ENCODE measurements at regions of chr6 and their contacts with region 1.

Region 1: GRCh38 chr6:15691250-15691869 is 28.5 kb upstream of the DTNBP1 start:
- DNase-seq: peak; percentile 78
- ATAC-seq: peak; percentile 100
- H3K4me3 ChIP-seq: no peak overlapping the region
- H3K27ac ChIP-seq: no peak overlapping the region
- H3K4me1 ChIP-seq: no peaks in the 10 kb centered on the region
- H3K27me3 ChIP-seq: no peaks in the 10 kb centered on the region
- CTCF ChIP-seq: peak; percentile 100
- POLR2A ChIP-seq: no peak
- RAD21 ChIP-seq: peak; percentile 99

Region 2: GRCh38 chr6:15722731-15723130 is 31.4 kb after region 1 on chr6:
- CTCF ChIA-PET with region 1: no interaction called
- POLR2A ChIA-PET with region 1: no interaction called
- RAD21 ChIA-PET with region 1: interaction called in 1 of 2 experiments, 11 read pairs
- intact Hi-C with region 1: no loop called
- DNase-seq: no peak
- ATAC-seq: no peak
- H3K4me3 ChIP-seq: no peak overlapping the region
- H3K27ac ChIP-seq: no peak overlapping the region
- H3K4me1 ChIP-seq: no peaks in the 10 kb centered on the region
- H3K27me3 ChIP-seq: no peaks in the 10 kb centered on the region
- CTCF ChIP-seq: no peak
- POLR2A ChIP-seq: no peak
- RAD21 ChIP-seq: no peak

Region 3: DNA sequence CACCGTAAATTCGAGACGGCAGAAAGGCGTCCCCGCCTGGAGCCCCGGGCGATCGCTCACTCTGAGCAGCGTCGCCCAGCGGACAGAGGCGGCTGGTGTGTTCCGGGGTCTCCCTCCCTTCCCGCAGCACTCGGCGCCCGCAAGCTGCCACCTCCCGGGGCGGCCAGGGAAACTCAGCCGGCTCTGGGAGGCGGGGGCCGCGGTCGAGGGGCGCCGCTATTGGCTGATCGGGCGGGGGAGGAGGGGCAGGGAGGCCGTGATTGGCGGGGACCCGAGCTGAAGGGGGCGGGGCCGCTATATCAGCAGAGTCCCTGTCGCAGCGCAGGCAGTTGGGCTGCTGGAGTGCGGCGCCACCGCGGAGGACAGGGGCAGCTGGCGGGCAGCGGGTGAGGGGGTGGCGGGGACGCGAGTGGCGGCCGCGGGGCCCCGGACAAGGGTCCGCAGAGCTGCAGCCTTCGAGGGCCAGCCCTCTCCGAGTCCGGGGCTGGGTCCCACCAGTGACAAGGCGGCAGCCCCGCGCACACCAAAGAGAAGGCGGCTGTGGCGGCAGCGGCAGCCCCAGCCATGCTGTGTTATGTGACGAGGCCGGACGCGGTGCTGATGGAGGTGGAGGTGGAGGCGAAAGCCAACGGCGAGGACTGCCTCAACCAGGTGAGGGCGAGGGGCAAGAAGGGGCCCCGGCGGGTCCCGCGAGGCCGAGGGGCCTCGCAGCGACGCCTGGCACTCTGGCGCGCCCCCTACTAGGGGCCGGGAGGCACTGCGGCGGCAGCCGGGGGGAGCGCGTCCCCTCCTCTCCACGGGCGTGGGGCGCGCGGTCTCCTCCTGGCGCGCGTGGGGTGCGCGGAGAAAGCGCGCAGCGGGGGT is 437.6 kb after region 1 on chr6 and contains the start of gene MYLIP:
- CTCF ChIA-PET with region 1: interaction called, 7 read pairs
- POLR2A ChIA-PET with region 1: interaction called, 5 read pairs
- RAD21 ChIA-PET with region 1: no interaction called
- intact Hi-C with region 1: loop called (anchors 1 kb)
- DNase-seq: peak; percentile 81
- ATAC-seq: peak; percentile 89
- H3K4me3 ChIP-seq: peak within 1 kb of the TSS; percentile 73 to 84
- H3K27ac ChIP-seq: peak within 1 kb of the TSS; percentile 79; the same call in 1 of the 2 replicates
- H3K4me1 ChIP-seq: peaks cover 16 to 22% of the 10 kb centered on the region in 2 experiments
- H3K27me3 ChIP-seq: no peaks in the 10 kb centered on the region
- CTCF ChIP-seq: peak; percentile 48 to 86 (median 72)
- POLR2A ChIP-seq: peak; percentile 95
- RAD21 ChIP-seq: peak; percentile 60
- total RNA-seq, gene MYLIP: 10.6 TPM

Region 4: GRCh38 chr6:16168858-16169257 is 477.5 kb after region 1 on chr6:
- CTCF ChIA-PET with region 1: interaction called, 7 read pairs
- POLR2A ChIA-PET with region 1: interaction called, 3 read pairs
- RAD21 ChIA-PET with region 1: no interaction called
- intact Hi-C with region 1: loop called (anchors 1 kb)
- DNase-seq: peak; percentile 10
- ATAC-seq: peak; percentile 55
- H3K4me3 ChIP-seq: no peak overlapping the region
- H3K27ac ChIP-seq: no peak overlapping the region
- H3K4me1 ChIP-seq: no peaks in the 10 kb centered on the region
- H3K27me3 ChIP-seq: peaks cover 17% of the 10 kb centered on the region; the same call in 1 of the 2 replicates
- CTCF ChIP-seq: peak; percentile 46 to 59 (median 47); a peak in 5 of 6 replicates
- POLR2A ChIP-seq: no peak
- RAD21 ChIP-seq: peak; percentile 66

Region 5: GRCh38 chr6:16183187-16183664 is 491.9 kb after region 1 on chr6:
- CTCF ChIA-PET with region 1: interaction called, 52 read pairs
- POLR2A ChIA-PET with region 1: no interaction called
- RAD21 ChIA-PET with region 1: interaction called, 3 to 4 read pairs
- intact Hi-C with region 1: loop called (anchors 1 kb)
- DNase-seq: peak; percentile 52
- ATAC-seq: peak; percentile 63
- H3K4me3 ChIP-seq: no peak overlapping the region
- H3K27ac ChIP-seq: no peak overlapping the region
- H3K4me1 ChIP-seq: peaks cover 0 to 5% of the 10 kb centered on the region in 2 experiments; a peak in 1 of 4 replicates
- H3K27me3 ChIP-seq: no peaks in the 10 kb centered on the region
- CTCF ChIP-seq: peak; percentile 55 to 87 (median 70); a peak in 5 of 6 replicates
- POLR2A ChIP-seq: no peak
- RAD21 ChIP-seq: peak; percentile 77

Region 6: DNA sequence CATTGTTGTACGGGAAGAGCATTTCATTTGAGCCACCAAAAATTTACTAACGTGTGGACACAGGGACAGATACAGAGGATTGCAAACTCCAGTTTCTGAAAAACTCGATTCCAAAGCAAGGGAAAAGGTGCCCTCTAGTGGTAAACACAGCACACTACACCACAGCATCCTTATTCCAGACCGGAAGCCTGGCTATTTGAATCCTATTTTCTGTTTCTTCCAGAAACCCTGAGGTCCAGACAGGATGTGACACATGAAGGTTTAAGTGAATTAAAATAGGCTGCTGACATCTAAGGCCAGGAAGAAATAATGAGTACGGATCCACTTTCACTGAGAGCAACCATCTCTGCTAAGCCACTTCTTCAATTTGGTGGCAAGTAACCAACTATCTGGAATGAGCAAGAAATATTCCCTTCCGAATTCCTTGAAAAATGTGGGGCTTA is 515.3 kb after region 1 on chr6:
- CTCF ChIA-PET with region 1: interaction called, 31 read pairs
- POLR2A ChIA-PET with region 1: interaction called, 3 read pairs
- RAD21 ChIA-PET with region 1: interaction called in 1 of 2 experiments, 3 read pairs
- intact Hi-C with region 1: loop called (anchors 1 kb)
- DNase-seq: peak; percentile 37
- ATAC-seq: peak; percentile 91
- H3K4me3 ChIP-seq: no peak overlapping the region
- H3K27ac ChIP-seq: no peak overlapping the region
- H3K4me1 ChIP-seq: peaks cover 0 to 3% of the 10 kb centered on the region in 2 experiments; a peak in 1 of 4 replicates
- H3K27me3 ChIP-seq: peaks cover 6% of the 10 kb centered on the region; the same call in 1 of the 2 replicates
- CTCF ChIP-seq: peak; percentile 88 to 97 (median 91)
- POLR2A ChIP-seq: no peak
- RAD21 ChIP-seq: peak; percentile 93

Measured in HCT116 (cell line).